ENCODE measurements at regions of chr11 and their contacts with region 1.

Region 1: DNA sequence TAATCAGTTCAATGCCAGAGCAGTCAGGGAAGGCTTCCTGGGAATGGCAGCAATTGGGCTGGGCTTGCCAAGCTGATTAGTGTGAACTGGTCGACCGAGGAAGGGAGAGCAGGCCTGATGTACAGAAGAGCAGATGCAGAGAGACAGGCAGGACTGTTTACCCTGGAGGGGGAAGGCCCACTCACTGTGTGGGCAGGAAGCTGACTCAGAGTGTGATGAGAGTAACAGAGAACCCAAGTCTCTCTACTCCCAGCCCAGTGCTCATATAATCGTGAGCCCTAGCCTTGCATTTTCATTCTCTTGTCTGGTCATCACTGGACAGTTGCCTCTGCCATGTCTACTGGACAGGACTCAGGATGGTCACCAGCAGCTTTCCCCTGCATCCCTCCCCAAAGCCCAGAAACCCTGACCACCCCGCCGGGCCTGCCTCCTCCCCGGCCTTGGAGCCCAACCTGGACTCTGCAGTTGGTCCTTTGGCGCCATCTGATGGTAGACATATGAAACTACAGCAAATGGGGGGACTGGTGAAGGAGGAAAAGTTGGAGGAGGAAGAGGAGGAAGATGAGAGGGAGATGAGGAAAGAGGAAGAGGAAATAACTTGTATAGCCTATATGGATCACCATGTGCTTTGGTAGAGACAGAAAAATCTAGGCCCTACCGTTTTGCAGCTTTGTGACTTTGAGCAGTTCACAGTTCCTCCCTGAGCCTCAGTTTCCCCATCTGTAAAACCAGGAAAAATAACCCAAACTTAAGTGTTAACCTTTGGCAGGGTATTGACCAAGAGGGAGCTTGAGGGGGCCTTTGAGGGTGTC is 43.4 kb upstream of the PRDM11 start:
- DNase-seq: peak; percentile 70
- ATAC-seq: peak; percentile 98
- H3K4me3 Mint-ChIP-seq: peak overlapping the region; percentile 85
- H3K27ac Mint-ChIP-seq: peak overlapping the region; percentile 88
- H3K4me1 Mint-ChIP-seq: peaks cover 19% of the 10 kb centered on the region
- H3K27me3 Mint-ChIP-seq: peaks cover 13% of the 10 kb centered on the region
- CTCF ChIP-seq: peak; percentile 99

Region 2: GRCh38 chr11:44286268-44286880 is 816.6 kb before region 1 on chr11:
- CTCF ChIA-PET with region 1: interaction called, 3 read pairs
- POLR2A ChIA-PET with region 1: no interaction called
- intact Hi-C with region 1: loop called (anchors 5 kb)
- DNase-seq: peak; percentile 55
- ATAC-seq: peak; percentile 79
- H3K4me3 Mint-ChIP-seq: no peak overlapping the region
- H3K27ac Mint-ChIP-seq: peak overlapping the region; percentile 16
- H3K4me1 Mint-ChIP-seq: no peaks in the 10 kb centered on the region
- H3K27me3 Mint-ChIP-seq: peaks cover 16% of the 10 kb centered on the region
- CTCF ChIP-seq: peak; percentile 44

Region 3: GRCh38 chr11:44727373-44728287 is 375.4 kb before region 1 on chr11:
- CTCF ChIA-PET with region 1: no interaction called
- POLR2A ChIA-PET with region 1: no interaction called
- intact Hi-C with region 1: loop called (anchors 1 kb)
- DNase-seq: peak; percentile 72
- ATAC-seq: peak; percentile 71
- H3K4me3 Mint-ChIP-seq: peak overlapping the region; percentile 86
- H3K27ac Mint-ChIP-seq: no peak overlapping the region
- H3K4me1 Mint-ChIP-seq: peaks cover 22% of the 10 kb centered on the region
- H3K27me3 Mint-ChIP-seq: peaks cover 15% of the 10 kb centered on the region
- CTCF ChIP-seq: no peak

Region 4: GRCh38 chr11:44936525-44936924 is 166.5 kb before region 1 on chr11:
- CTCF ChIA-PET with region 1: interaction called, 1,010 read pairs
- POLR2A ChIA-PET with region 1: interaction called, 72 read pairs
- intact Hi-C with region 1: loop called (anchors 1 kb)
- DNase-seq: peak; percentile 84
- ATAC-seq: peak; percentile 95
- H3K4me3 Mint-ChIP-seq: no peak overlapping the region
- H3K27ac Mint-ChIP-seq: no peak overlapping the region
- H3K4me1 Mint-ChIP-seq: peaks cover 27% of the 10 kb centered on the region
- H3K27me3 Mint-ChIP-seq: no peaks in the 10 kb centered on the region
- CTCF ChIP-seq: peak; percentile 71

Region 5: DNA sequence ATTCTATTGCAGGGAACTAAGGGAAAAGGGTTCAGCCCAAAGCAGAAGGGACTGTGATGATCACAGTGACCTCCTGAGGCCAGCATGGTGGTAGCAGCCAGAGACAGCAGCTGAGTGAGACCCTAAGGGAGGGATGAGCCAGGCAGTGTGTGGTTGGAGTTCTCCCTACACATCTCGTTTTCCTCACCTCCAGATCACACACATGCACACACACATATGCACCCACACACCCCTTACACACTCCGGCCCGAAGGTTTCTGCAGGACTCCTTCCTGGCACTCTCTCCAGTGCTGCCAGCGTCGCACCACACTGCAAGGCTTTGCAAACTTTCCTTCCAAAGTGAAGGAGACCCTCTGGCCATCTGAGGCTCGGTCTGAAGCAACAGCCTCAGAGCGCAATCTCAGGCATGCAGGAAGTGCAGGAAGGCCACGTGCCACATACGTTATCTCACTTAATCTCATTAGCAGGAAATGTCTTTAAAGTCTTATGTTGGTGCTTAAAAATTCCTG is 125.5 kb before region 1 on chr11:
- CTCF ChIA-PET with region 1: interaction called, 12 read pairs
- POLR2A ChIA-PET with region 1: no interaction called
- intact Hi-C with region 1: no loop called
- DNase-seq: no peak
- ATAC-seq: no peak
- H3K4me3 Mint-ChIP-seq: peak overlapping the region; percentile 13
- H3K27ac Mint-ChIP-seq: no peak overlapping the region
- H3K4me1 Mint-ChIP-seq: peaks cover 21% of the 10 kb centered on the region
- H3K27me3 Mint-ChIP-seq: no peaks in the 10 kb centered on the region
- CTCF ChIP-seq: no peak

Region 6: DNA sequence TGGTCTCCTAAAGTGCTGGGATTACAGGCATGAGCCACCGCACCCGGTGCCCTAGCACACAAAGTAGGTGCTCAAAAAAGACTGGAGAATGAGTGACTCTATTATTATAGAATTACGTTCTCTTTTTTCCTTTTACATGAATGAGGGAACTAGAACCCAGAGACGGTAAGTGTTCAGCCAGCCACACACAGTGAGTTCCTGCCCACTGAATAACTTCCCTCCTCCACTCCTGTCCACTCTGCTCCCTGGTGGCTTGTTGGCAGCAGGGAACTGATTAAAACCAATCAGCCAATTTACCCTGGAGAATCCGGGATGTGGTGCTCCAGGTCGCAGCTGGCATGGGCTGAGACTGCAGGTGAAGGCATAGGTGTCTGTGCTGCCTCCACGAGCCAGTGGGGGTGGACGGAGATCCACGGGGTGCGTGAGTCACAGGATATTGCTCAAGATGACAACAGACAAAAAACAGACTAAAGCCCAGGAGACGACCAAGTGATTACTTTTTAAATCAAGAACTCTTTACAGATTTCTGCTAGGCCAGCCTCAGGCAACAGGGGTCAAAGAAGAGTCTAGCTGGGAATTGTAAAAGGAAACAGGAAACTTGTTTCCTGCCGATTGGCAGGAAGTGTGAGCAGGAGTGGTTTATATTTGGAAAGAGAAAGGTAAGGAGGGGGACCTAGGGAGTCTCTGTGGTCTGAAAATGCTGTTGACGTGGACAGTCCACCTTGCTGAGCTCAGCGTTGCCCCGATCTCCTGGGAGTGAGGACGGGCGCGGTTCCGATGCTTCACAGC is 57.1 kb before region 1 on chr11:
- CTCF ChIA-PET with region 1: no interaction called
- POLR2A ChIA-PET with region 1: no interaction called
- intact Hi-C with region 1: no loop called
- DNase-seq: no peak
- ATAC-seq: no peak
- H3K4me3 Mint-ChIP-seq: no peak overlapping the region
- H3K27ac Mint-ChIP-seq: no peak overlapping the region
- H3K4me1 Mint-ChIP-seq: no peaks in the 10 kb centered on the region
- H3K27me3 Mint-ChIP-seq: peaks cover 5% of the 10 kb centered on the region
- CTCF ChIP-seq: no peak

Region 7: GRCh38 chr11:45147017-45147728 is 44.2 kb after region 1 on chr11:
- CTCF ChIA-PET with region 1: no interaction called
- POLR2A ChIA-PET with region 1: no interaction called
- intact Hi-C with region 1: loop called (anchors 2 kb)
- DNase-seq: peak; percentile 92
- ATAC-seq: peak; percentile 98
- H3K4me3 Mint-ChIP-seq: peak overlapping the region; percentile 87
- H3K27ac Mint-ChIP-seq: peak overlapping the region; percentile 77
- H3K4me1 Mint-ChIP-seq: peaks cover 33% of the 10 kb centered on the region
- H3K27me3 Mint-ChIP-seq: peaks cover 7% of the 10 kb centered on the region
- CTCF ChIP-seq: no peak

Measured in activated B cell treated with CpG ODN at 0.5 μM for 24 hours (primary cell).